Activated CD8-positive, alpha-beta T cell treated with anti-CD3 and anti-CD28 coated beads, Interleukin-2, amount 10 ng/mL, durations not matched to agents 7 days and 5 days (primary cell): ENCODE measurements at regions of chr22 and their contacts with region 1.

Region 1: DNA sequence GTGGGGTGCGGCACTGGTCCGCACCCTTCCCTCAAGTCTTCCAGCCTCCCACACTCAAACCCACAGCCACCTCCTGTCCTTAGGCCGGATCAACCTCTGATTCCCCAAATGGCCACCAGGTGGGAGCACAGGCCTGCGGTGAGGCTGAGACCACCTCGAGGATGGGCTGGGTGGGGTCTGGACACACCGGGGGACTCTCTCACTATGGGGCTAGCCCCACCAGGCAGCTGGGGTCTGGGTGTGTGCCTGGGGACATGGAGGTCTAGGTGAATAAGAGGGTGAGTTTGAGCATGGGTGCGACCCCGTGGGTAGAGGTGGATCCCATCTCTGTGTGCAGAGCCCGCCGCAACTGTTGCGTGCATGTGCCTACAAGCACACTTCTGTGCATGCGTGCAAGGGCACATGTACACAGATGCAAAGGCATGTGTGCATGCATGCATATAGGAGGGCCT is 32.6 kb downstream of the MYO18B start:
- DNase-seq: no peak
- ATAC-seq: no peak
- H3K4me3 Mint-ChIP-seq: no peak overlapping the region
- H3K27ac Mint-ChIP-seq: no peak overlapping the region
- H3K4me1 Mint-ChIP-seq: peaks cover 27% of the 10 kb centered on the region
- H3K27me3 Mint-ChIP-seq: peaks cover 6% of the 10 kb centered on the region

Region 2: DNA sequence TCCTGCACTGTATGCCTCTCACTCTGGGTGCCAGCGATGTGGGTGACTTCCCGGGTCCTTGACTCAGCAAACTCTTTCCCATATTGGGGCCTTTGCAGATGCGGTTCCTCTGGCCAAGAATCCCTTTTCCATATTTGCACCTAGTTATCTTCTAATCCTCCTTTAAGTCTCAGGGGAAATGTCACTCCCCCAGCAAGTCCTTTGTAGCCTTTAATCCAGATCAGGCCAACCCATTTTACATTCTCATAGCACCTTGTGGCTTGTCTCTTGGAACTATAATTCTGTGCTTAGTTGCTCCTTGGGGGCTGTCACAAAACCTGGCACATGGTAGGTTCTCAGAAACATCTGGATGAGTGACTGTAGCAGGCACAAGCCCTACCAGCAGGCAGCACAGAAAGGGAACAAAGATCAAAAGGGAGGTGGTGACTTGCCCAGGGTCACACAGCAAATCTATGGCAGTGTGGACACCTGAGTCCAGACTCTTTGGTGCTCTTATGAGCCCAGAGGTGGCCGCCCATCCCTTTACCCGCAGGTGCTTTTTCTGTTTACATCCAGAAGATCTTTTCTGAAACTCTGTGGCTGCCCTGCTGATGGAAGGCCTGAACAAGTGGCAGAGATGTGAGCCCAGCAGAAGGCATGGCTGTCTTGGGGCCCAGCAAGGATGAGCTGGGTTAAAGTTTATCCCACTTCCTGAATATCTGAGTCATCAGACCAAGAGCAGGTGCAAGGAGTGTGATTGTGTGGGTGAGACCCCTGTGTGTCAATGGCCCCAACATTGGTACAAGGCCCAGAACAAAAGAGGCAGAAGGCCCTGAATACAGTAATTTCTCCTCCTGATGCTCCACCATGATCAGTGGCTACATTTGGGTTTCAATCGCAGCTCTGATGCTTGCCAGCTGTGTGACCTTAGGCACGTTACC is 288.7 kb before region 1 on chr22:
- CTCF ChIA-PET with region 1: interaction called, 11 read pairs
- POLR2A ChIA-PET with region 1: no interaction called
- DNase-seq: no peak
- ATAC-seq: peak; percentile 53
- H3K4me3 Mint-ChIP-seq: no peak overlapping the region
- H3K27ac Mint-ChIP-seq: peak overlapping the region; percentile 26
- H3K4me1 Mint-ChIP-seq: peaks cover 30% of the 10 kb centered on the region
- H3K27me3 Mint-ChIP-seq: no peaks in the 10 kb centered on the region

Region 3: GRCh38 chr22:25696763-25697667 is 77.6 kb before region 1 on chr22:
- CTCF ChIA-PET with region 1: interaction called, 71 read pairs
- POLR2A ChIA-PET with region 1: no interaction called
- DNase-seq: no peak
- ATAC-seq: no peak
- H3K4me3 Mint-ChIP-seq: no peak overlapping the region
- H3K27ac Mint-ChIP-seq: no peak overlapping the region
- H3K4me1 Mint-ChIP-seq: peaks cover 19% of the 10 kb centered on the region
- H3K27me3 Mint-ChIP-seq: no peaks in the 10 kb centered on the region

Region 4: GRCh38 chr22:25736378-25737011 is 38.1 kb before region 1 on chr22:
- CTCF ChIA-PET with region 1: interaction called, 11 read pairs
- POLR2A ChIA-PET with region 1: interaction called, 3 read pairs
- DNase-seq: peak; percentile 89
- ATAC-seq: peak; percentile 88
- H3K4me3 Mint-ChIP-seq: peak overlapping the region; percentile 48
- H3K27ac Mint-ChIP-seq: peak overlapping the region; percentile 99
- H3K4me1 Mint-ChIP-seq: peaks cover 59% of the 10 kb centered on the region
- H3K27me3 Mint-ChIP-seq: no peaks in the 10 kb centered on the region

Region 5: GRCh38 chr22:25759825-25760231 is 14.8 kb before region 1 on chr22:
- CTCF ChIA-PET with region 1: interaction called, 23 read pairs
- POLR2A ChIA-PET with region 1: no interaction called
- DNase-seq: no peak
- ATAC-seq: no peak
- H3K4me3 Mint-ChIP-seq: no peak overlapping the region
- H3K27ac Mint-ChIP-seq: no peak overlapping the region
- H3K4me1 Mint-ChIP-seq: peaks cover 45% of the 10 kb centered on the region
- H3K27me3 Mint-ChIP-seq: no peaks in the 10 kb centered on the region